Sigmoid colon (tissue), 7 donors: ENCODE measurements at regions of chr2 and their contacts with region 1.

Region 1: DNA sequence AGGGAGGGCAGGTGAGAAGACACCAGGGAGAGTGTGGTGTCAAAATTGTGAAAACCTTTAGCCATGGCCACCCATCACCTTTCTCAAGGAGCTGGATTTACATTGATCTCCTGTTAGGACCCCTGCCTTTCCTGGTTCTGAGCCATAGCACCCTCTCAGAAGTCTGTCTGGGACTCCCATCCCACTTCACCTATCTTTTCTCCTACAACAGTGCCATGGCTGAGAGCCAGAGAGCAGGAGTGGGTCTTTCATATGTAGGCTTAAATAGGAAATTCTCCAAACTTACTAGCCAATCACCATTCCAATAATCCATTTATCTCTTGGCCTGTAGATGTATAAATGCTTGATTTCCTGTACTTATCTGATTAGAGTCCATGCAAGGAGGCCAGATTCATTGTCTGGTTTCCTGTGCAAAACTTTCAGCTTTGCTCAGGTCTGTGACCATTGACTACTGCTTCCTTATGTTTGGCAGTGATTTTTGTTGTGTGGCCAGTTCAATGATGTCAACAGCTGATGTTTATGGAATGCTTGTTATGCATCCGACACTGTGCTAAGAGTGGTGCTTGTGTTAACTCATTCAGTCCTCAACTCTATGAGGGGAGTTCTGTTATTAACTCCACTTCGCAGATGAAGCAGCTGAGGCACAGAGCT is 57.6 kb upstream of the IGFBP5 start:
- DNase-seq: no peak
- H3K4me3 ChIP-seq: no peak overlapping the region
- H3K27ac ChIP-seq: peak overlapping the region in 1 of 4 donors; percentile 82
- H3K4me1 ChIP-seq: peaks cover 0 to 67% (median 48%) of the 10 kb centered on the region in 4 donors
- H3K27me3 ChIP-seq: no peaks in the 10 kb centered on the region
- CTCF ChIP-seq: no peak
- EP300 ChIP-seq: no peak
- POLR2A ChIP-seq: no peak

Region 2: DNA sequence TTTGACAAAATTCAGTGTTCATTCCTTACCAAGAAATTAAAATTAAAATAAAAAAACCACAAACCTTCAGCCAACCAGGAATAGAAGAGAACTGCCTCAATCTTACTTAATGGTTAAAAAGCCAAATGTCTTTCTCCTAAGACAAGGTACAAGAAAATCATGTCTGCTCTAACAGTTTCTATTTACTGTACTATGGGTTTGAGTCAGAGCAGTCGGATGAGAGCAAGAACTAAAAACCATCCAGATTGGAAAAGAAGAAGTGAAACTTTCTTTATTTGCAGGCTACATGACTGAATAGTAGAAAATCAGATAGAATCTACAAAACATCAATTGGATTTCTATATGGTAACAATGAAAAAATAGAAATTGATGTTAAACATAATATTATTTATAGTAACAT is 662.3 kb after region 1 on chr2:
- intact Hi-C with region 1: loop called (anchors 10 kb)
- DNase-seq: no peak
- H3K4me3 ChIP-seq: no peak overlapping the region
- H3K27ac ChIP-seq: peak overlapping the region in 2 of 4 donors; percentile 83 to 85
- H3K4me1 ChIP-seq: peaks cover 0 to 85% (median 59%) of the 10 kb centered on the region in 4 donors
- H3K27me3 ChIP-seq: no peaks in the 10 kb centered on the region
- CTCF ChIP-seq: no peak
- EP300 ChIP-seq: no peak
- POLR2A ChIP-seq: no peak